ENCODE measurements at regions of chr3 and their contacts with region 1.

Region 1: DNA sequence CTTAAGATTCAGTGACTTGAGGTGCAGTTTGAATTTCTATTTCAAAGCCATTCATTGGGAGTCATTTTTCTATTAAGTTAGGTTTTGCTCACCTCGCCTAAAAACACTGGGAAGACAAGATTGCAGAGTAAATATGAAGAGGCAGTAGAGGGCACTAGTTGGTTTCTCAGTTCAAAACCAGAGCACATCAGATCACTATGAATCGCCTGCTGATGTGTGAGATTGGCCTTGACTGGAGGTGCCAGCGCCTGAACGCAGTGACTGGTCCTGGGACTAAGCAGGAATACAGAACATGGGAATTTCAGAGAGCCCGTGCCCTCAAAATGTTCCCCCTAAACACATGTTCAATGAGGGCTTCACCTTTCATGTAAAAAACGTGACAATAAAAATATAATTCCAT is 229.0 kb downstream of the ITPR1 start:
- DNase-seq: peak; percentile 41
- H3K4me3 Mint-ChIP-seq: no peak overlapping the region
- H3K27ac Mint-ChIP-seq: no peak overlapping the region
- H3K4me1 Mint-ChIP-seq: peaks cover 19% of the 10 kb centered on the region
- H3K27me3 Mint-ChIP-seq: no peaks in the 10 kb centered on the region

Region 2: GRCh38 chr3:4466741-4467521 is 255.2 kb before region 1 on chr3 and contains the start of gene SUMF1:
- CTCF ChIA-PET with region 1: no interaction called
- POLR2A ChIA-PET with region 1: no interaction called
- intact Hi-C with region 1: no loop called
- DNase-seq: peak; percentile 84
- H3K4me3 Mint-ChIP-seq: peak within 1 kb of the TSS; percentile 90
- H3K27ac Mint-ChIP-seq: peak within 1 kb of the TSS; percentile 87
- H3K4me1 Mint-ChIP-seq: peaks cover 14% of the 10 kb centered on the region
- H3K27me3 Mint-ChIP-seq: no peaks in the 10 kb centered on the region
- total RNA-seq, gene SUMF1: 5.1 to 5.6 TPM

Region 3: DNA sequence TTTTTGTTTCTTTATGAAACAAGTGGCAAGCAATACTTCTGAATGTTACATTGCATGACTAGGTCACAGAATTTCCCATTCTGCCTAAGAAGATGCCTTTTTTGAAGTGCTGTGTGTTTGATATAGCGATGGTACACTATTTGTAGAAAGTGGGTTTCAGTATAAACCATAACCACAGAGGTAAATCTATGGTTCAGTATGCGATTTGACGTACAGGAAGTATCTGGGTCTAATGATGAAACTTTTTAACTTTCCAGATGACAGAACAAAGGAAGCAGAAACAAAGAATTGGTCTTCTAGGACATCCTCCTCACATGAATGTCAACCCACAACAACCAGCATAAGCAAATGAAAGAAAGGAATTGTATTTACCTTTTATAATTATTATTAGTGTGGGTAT is 123.8 kb after region 1 on chr3:
- CTCF ChIA-PET with region 1: interaction called, 4 read pairs
- POLR2A ChIA-PET with region 1: no interaction called
- intact Hi-C with region 1: loop called (anchors 5 kb)
- DNase-seq: no peak
- H3K4me3 Mint-ChIP-seq: peak overlapping the region; percentile 14
- H3K27ac Mint-ChIP-seq: peak overlapping the region; percentile 83
- H3K4me1 Mint-ChIP-seq: peaks cover 96% of the 10 kb centered on the region
- H3K27me3 Mint-ChIP-seq: no peaks in the 10 kb centered on the region

Region 4: DNA sequence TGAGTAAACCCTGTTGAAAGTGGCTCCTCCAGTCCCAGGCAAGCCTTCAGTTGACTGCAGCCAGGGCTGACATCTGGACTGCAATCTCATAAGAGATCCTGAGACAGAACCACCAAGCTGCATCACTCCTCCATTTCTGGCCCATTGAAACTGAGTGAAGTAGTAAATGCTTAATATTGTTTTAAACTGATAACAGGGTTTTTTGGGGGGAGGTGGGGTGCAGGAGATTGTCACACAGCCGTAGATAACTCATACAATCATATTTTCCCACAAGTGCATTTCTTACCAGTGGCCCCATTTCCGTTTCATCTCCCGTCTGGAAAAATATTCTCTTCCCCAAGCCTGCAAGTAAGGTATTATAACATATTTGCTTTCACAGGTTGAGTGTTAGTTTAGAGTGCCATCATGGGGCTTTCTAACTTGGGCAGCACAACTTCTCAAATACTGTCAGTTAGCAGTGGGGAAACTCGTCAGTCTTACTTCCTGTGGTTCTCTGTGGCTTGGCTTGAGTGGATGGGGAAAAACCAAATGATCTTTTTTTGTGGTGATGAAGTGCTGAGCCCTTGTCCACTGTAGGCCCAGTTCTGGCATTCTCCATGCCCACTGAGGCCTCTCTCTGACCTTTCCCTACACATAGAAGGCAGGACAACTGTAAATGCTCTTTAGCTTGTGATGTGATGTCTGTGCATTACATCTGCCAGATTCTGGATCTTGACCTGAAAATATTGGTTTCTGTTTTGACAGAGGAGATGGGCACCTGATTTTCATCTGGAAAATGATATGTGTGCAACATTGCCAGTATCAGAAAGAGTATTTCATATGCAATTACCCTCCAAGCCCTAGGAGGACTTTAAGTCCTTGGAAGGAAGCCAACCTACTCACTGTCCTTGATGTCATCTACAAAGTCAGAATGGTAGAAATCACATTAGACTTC is 167.1 kb after region 1 on chr3:
- CTCF ChIA-PET with region 1: interaction called, 3 read pairs
- POLR2A ChIA-PET with region 1: no interaction called
- intact Hi-C with region 1: loop called (anchors 2 kb)
- DNase-seq: peak; percentile 67
- H3K4me3 Mint-ChIP-seq: no peak overlapping the region
- H3K27ac Mint-ChIP-seq: peak overlapping the region; percentile 90
- H3K4me1 Mint-ChIP-seq: peaks cover 31% of the 10 kb centered on the region
- H3K27me3 Mint-ChIP-seq: no peaks in the 10 kb centered on the region

Region 5: DNA sequence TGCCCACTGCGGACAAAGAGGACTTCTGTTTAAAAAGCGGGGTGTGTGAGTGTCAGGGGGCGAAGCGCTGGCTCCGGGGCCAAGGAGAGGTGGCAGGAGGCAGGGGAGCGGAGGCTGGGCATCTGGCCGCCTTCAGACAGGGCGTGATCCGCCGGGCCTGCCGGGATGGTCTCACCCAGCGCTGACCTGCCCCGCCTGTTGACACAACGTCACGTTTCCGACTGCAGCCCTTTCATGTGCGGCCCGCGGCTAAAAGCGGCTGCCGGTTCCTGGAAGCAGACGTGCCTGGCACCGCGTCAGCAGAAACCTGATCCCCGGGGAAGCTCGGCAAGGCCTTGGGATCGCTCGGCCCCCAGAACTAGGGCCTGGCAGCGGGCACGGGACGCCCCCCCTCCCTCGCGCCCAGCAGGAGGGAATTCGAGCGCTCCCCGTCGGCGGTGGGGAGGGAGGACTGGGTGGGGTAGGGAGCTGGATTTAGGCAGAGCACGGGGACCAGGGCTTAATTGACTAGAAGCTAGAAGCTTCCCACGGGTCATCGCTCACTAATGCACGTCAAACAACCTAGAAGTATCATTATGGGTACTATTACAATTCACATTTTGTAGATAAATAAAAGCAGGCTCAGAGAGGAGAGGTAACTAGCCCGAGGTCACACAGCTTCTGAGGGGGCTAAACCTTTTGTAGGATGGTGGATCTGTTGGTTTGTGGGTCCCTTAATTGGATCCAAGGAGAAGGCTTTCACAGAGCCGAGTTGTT is 264.9 kb after region 1 on chr3:
- CTCF ChIA-PET with region 1: interaction called, 12 read pairs
- POLR2A ChIA-PET with region 1: no interaction called
- intact Hi-C with region 1: no loop called
- DNase-seq: peak; percentile 86
- H3K4me3 Mint-ChIP-seq: peak overlapping the region; percentile 77
- H3K27ac Mint-ChIP-seq: peak overlapping the region; percentile 87
- H3K4me1 Mint-ChIP-seq: peaks cover 60% of the 10 kb centered on the region
- H3K27me3 Mint-ChIP-seq: no peaks in the 10 kb centered on the region

Region 6: GRCh38 chr3:5057857-5058324 is 335.8 kb after region 1 on chr3:
- CTCF ChIA-PET with region 1: interaction called, 267 read pairs
- POLR2A ChIA-PET with region 1: no interaction called
- intact Hi-C with region 1: loop called (anchors 1 kb)
- DNase-seq: peak; percentile 87
- H3K4me3 Mint-ChIP-seq: no peak overlapping the region
- H3K27ac Mint-ChIP-seq: no peak overlapping the region
- H3K4me1 Mint-ChIP-seq: peaks cover 16% of the 10 kb centered on the region
- H3K27me3 Mint-ChIP-seq: peaks cover 8% of the 10 kb centered on the region

Region 7: GRCh38 chr3:5187156-5187919 is 465.2 kb after region 1 on chr3 and contains the start of gene EDEM1:
- CTCF ChIA-PET with region 1: no interaction called
- POLR2A ChIA-PET with region 1: no interaction called
- intact Hi-C with region 1: loop called (anchors 10 kb)
- DNase-seq: peak; percentile 98
- H3K4me3 Mint-ChIP-seq: peak within 1 kb of the TSS; percentile 96
- H3K27ac Mint-ChIP-seq: peak within 1 kb of the TSS; percentile 98
- H3K4me1 Mint-ChIP-seq: peaks cover 27% of the 10 kb centered on the region
- H3K27me3 Mint-ChIP-seq: no peaks in the 10 kb centered on the region
- total RNA-seq, gene EDEM1: 192 to 203 TPM